ENCODE measurements at regions of chr2 and their contacts with region 1.

Region 1: GRCh38 chr2:136384531-136385303 is 266.8 kb upstream of the CXCR4 start:
- DNase-seq: peak in 1 of 2 donors; percentile 83
- ATAC-seq: peak; percentile 73 to 83 (median 80)
- H3K4me3 ChIP-seq: no peak overlapping the region
- H3K4me3 Mint-ChIP-seq: no peak overlapping the region
- H3K27ac ChIP-seq: no peak overlapping the region
- H3K27ac Mint-ChIP-seq: peak overlapping the region in 1 of 2 donors; percentile 8
- H3K4me1 ChIP-seq: peaks cover 13% of the 10 kb centered on the region
- H3K4me1 Mint-ChIP-seq: peaks cover 7 to 17% of the 10 kb centered on the region in 2 donors
- H3K27me3 ChIP-seq: no peaks in the 10 kb centered on the region
- H3K27me3 Mint-ChIP-seq: no peaks in the 10 kb centered on the region
- CTCF ChIP-seq: peak; percentile 58

Region 2: DNA sequence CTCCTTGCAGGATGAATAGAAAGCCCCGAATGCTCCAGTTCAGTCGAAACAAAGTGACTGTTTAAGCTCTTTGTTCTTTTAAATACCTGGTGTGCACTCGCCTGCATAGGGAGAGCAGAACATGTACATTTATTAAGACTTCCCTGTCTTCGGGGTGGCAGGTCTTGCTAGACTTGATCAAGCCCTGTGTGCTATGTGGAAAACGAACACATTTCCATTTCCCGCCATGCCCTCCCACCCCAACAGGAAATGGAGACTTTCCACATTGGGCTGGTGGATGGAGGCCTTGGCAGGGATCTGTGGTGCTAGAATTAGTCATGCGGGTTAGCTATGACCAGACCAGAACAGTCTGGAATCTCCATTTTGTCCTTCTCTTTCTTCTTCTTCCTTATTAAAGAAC is 59.6 kb after region 1 on chr2:
- intact Hi-C with region 1: loop called (anchors 2 kb)
- DNase-seq: no peak
- ATAC-seq: no peak
- H3K4me3 ChIP-seq: no peak overlapping the region
- H3K4me3 Mint-ChIP-seq: no peak overlapping the region
- H3K27ac ChIP-seq: no peak overlapping the region
- H3K27ac Mint-ChIP-seq: no peak overlapping the region
- H3K4me1 ChIP-seq: no peaks in the 10 kb centered on the region
- H3K4me1 Mint-ChIP-seq: no peaks in the 10 kb centered on the region
- H3K27me3 ChIP-seq: no peaks in the 10 kb centered on the region
- H3K27me3 Mint-ChIP-seq: peaks cover 0 to 9% of the 10 kb centered on the region in 2 donors
- CTCF ChIP-seq: no peak